Naive thymus-derived CD4-positive, alpha-beta T cell (primary cell): ENCODE measurements at regions of chr16 and their contacts with region 1.

Region 1: DNA sequence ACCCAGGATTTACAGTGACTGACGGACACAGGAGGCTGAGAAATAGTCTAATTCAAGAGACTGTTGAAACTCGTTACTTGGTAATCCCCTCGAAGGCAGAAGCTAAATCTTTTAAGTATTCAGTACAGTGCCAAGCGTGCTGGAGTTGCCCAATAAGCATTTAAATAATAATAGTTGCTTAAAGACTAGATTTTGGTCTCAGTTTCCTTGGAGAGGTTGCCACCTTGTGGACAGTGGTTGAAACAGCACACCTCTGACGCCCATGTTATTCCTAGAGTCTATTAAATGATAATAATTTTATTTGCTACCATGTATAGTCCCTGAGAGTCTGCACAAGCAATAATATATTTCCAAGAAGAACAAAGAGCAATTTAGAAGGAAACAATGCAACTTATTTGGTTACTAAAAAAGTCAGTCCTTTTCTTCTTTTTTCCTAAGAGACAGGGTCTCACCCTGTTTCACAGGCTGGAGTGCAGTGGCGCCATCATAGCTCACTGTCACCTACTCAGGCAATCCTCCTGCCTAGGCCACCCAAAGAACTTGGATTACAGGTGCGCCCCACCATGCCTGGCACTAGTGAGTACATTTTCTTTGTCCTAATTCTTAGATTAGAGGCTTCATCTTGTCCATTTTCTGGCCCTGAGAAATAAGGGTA is 138.0 kb upstream of the NUDT7 start:
- DNase-seq: peak in 6 of 9 donors; percentile 16 to 45 (median 30)
- ATAC-seq: peak; percentile 67
- H3K4me3 ChIP-seq: no peak overlapping the region
- H3K4me3 Mint-ChIP-seq: no peak overlapping the region
- H3K27ac ChIP-seq: no peak overlapping the region
- H3K27ac Mint-ChIP-seq: no peak overlapping the region
- H3K4me1 ChIP-seq: no peaks in the 10 kb centered on the region
- H3K4me1 Mint-ChIP-seq: peaks cover 0 to 9% (median 0%) of the 10 kb centered on the region in 7 donors
- H3K27me3 ChIP-seq: peaks cover 0 to 4% of the 10 kb centered on the region in 2 donors
- H3K27me3 Mint-ChIP-seq: peaks cover 7 to 40% (median 29%) of the 10 kb centered on the region in 5 donors

Region 2: GRCh38 chr16:78551487-78552085 is 967.3 kb after region 1 on chr16:
- CTCF ChIA-PET with region 1: no interaction called
- POLR2A ChIA-PET with region 1: no interaction called
- intact Hi-C with region 1: loop called in 1 of 2 experiments (anchors 5 kb)
- DNase-seq: no peak
- ATAC-seq: no peak
- H3K4me3 ChIP-seq: no peak overlapping the region
- H3K4me3 Mint-ChIP-seq: peak overlapping the region in 3 of 10 donors; percentile 0 to 57 (median 9)
- H3K27ac ChIP-seq: no peak overlapping the region
- H3K27ac Mint-ChIP-seq: peak overlapping the region in 1 of 9 donors; percentile 75
- H3K4me1 ChIP-seq: no peaks in the 10 kb centered on the region
- H3K4me1 Mint-ChIP-seq: peaks cover 3 to 14% (median 8%) of the 10 kb centered on the region in 7 donors
- H3K27me3 ChIP-seq: no peaks in the 10 kb centered on the region
- H3K27me3 Mint-ChIP-seq: peaks cover 0 to 12% (median 0%) of the 10 kb centered on the region in 5 donors